ENCODE measurements at regions of chr15 and their contacts with region 1.

Region 1: GRCh38 chr15:52139599-52140491 is 27.3 kb upstream of the BCL2L10 start:
- DNase-seq: peak; percentile 71 to 88 (median 74)
- ATAC-seq: peak; percentile 87
- H3K4me3 ChIP-seq: no peak overlapping the region
- H3K27ac ChIP-seq: no peak overlapping the region
- H3K4me1 ChIP-seq: peaks cover 9 to 31% of the 10 kb centered on the region in 2 experiments; a peak in 4 of 5 replicates
- H3K27me3 ChIP-seq: no peaks in the 10 kb centered on the region
- CTCF ChIP-seq: peak; percentile 90 to 95 (median 91)
- EP300 ChIP-seq: no peak
- POLR2A ChIP-seq: no peak
- RAD21 ChIP-seq: peak; percentile 76 to 86

Region 2: GRCh38 chr15:52103217-52104207 is 36.3 kb before region 1 on chr15:
- CTCF ChIA-PET with region 1: no interaction called
- POLR2A ChIA-PET with region 1: no interaction called
- in situ Hi-C with region 1: no loop called
- intact Hi-C with region 1: loop called (anchors 5 kb)
- DNase-seq: peak in 1 of 4 experiments; percentile 50
- ATAC-seq: no peak
- H3K4me3 ChIP-seq: no peak overlapping the region
- H3K27ac ChIP-seq: no peak overlapping the region
- H3K4me1 ChIP-seq: peaks cover 0 to 4% of the 10 kb centered on the region in 2 experiments; a peak in 4 of 5 replicates
- H3K27me3 ChIP-seq: no peaks in the 10 kb centered on the region
- CTCF ChIP-seq: no peak
- EP300 ChIP-seq: no peak
- POLR2A ChIP-seq: no peak
- RAD21 ChIP-seq: no peak

Region 3: DNA sequence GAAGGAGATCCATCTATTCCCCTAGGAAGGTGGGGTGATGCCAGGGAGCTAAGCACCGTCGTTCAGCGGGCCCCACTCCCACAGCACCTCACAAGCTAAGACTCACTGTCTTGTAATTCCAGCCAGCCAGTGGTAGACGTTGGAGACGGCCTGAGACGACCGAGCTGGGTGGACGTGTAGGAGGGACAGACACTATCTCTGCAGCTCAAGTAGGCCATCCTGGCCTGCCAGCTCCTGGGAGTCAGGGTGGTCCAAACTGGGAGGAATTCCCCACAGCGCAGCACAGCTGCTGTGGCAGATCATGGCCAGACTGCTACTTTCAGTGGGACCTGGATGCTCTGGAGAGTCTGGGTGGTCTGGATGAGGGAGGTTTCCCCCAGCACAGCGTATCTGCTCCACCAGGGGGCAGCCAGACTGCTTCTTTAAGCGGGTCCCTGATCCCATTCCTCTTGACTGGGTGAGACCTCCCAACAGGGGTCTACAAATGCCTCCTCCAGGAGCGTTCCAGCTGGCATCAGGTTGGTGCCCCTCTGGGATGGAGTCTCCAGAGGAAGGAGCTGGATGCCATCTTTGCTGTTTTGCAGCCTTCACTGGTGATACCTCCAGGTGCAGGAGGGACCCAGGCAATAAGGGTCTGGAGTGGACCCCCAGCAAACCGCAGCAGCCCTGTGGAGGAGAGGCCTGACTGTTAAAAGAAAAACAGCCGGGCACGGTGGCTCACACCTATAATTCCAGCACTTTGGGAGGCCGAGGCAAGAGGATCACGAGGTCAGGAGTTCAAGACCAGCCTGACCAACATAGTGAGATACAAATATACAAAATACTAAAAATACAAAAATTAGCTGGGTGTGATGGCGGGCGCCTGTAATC is 23.7 kb after region 1 on chr15:
- CTCF ChIA-PET with region 1: no interaction called
- POLR2A ChIA-PET with region 1: no interaction called
- in situ Hi-C with region 1: no loop called
- intact Hi-C with region 1: no loop called
- DNase-seq: peak in 3 of 4 experiments; percentile 31 to 52 (median 37)
- ATAC-seq: peak; percentile 93
- H3K4me3 ChIP-seq: no peak overlapping the region
- H3K27ac ChIP-seq: no peak overlapping the region
- H3K4me1 ChIP-seq: peaks cover 0 to 6% of the 10 kb centered on the region in 2 experiments; a peak in 1 of 5 replicates
- H3K27me3 ChIP-seq: peaks cover 32 to 34% of the 10 kb centered on the region in 2 experiments
- CTCF ChIP-seq: peak; percentile 44 to 65 (median 44); a peak in 5 of 6 replicates
- EP300 ChIP-seq: no peak
- POLR2A ChIP-seq: no peak
- RAD21 ChIP-seq: peak; percentile 14 to 38; a peak in 3 of 4 replicates

Region 4: DNA sequence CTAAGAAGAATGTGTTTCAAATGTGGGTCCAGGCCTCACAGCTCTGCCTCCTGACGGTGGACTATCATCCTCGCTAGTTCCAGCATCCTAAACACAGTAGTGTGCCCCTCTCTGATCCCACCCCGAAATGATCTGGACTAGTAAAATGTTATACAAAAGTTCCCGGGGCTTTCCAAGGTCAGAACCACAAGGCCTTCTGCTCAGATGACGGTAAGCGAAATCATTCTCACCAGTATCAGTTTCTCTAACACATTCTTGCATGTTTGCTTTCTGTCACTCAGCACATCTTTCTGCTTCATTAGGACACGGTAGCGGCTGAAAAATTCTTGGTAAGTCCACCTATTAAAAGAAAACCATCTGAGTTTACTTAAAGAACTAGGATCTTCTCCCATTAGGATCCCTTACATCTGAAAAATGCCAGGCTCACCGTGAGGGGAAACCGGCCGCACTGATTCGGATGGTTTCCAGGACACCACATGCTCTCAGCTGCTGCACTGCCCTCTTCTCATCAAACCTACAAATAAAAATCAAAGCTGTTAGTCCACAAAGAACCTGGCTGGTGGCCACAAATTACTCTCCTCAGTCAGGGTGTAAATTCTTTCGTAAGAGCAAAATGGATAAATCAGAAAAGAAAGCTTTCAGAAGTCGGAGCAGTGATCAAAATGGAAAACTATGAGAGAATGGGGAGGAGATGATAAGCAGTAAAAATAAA is 239.7 kb after region 1 on chr15:
- CTCF ChIA-PET with region 1: no interaction called
- POLR2A ChIA-PET with region 1: no interaction called
- in situ Hi-C with region 1: no loop called
- intact Hi-C with region 1: no loop called
- DNase-seq: no peak
- ATAC-seq: no peak
- H3K4me3 ChIP-seq: no peak overlapping the region
- H3K27ac ChIP-seq: no peak overlapping the region
- H3K4me1 ChIP-seq: no peaks in the 10 kb centered on the region
- H3K27me3 ChIP-seq: peaks cover 8 to 28% of the 10 kb centered on the region in 2 experiments; a peak in 3 of 5 replicates
- CTCF ChIP-seq: no peak
- EP300 ChIP-seq: no peak
- POLR2A ChIP-seq: no peak
- RAD21 ChIP-seq: no peak